MCF 10A (cell line): ENCODE measurements at regions of chr2 and their contacts with region 1.

Region 1: DNA sequence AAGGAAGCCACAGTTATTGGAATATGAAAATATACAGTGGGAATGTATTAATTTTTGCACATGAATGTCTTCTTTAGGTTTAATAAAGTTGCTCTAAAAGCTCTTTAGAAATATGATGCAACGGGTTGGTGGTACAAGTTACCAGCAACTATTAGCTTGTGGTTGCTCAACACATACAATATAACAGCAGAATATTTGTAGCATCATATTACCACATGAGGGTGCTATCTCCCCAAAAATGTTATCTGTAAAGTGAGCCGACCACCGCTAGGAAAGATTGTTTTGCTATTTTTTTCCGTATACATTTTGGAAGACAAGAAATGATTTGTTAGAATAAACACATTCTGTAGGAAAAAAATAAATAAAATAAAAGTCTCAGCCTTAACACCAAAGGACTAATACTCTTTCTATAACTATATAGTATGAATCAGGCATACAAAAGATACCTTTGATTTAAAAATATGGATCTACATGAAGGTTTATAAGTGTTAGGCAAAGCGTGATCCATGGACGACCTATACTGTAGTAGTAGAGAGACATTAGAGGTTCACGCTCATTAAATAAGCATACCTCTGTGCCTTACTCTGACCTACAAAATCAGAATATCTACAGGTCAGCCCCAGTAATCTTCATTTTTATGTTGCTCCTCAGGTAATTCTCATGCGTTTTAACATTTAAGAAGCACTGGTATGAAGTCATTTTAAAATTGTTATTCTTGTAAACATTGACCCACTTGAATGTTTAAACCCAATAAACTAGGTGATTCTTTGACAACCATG is 1110.6 kb upstream of the ACVR2A start:
- DNase-seq: peak; percentile 77
- H3K4me3 Mint-ChIP-seq: no peak overlapping the region
- H3K27ac Mint-ChIP-seq: no peak overlapping the region
- H3K4me1 Mint-ChIP-seq: no peaks in the 10 kb centered on the region
- H3K27me3 Mint-ChIP-seq: no peaks in the 10 kb centered on the region
- CTCF ChIP-seq: peak; percentile 67

Region 2: GRCh38 chr2:146777181-146777580 is 43.0 kb after region 1 on chr2:
- CTCF ChIA-PET with region 1: no interaction called
- POLR2A ChIA-PET with region 1: no interaction called
- intact Hi-C with region 1: no loop called
- DNase-seq: no peak
- H3K4me3 Mint-ChIP-seq: no peak overlapping the region
- H3K27ac Mint-ChIP-seq: no peak overlapping the region
- H3K4me1 Mint-ChIP-seq: no peaks in the 10 kb centered on the region
- H3K27me3 Mint-ChIP-seq: no peaks in the 10 kb centered on the region
- CTCF ChIP-seq: no peak

Region 3: DNA sequence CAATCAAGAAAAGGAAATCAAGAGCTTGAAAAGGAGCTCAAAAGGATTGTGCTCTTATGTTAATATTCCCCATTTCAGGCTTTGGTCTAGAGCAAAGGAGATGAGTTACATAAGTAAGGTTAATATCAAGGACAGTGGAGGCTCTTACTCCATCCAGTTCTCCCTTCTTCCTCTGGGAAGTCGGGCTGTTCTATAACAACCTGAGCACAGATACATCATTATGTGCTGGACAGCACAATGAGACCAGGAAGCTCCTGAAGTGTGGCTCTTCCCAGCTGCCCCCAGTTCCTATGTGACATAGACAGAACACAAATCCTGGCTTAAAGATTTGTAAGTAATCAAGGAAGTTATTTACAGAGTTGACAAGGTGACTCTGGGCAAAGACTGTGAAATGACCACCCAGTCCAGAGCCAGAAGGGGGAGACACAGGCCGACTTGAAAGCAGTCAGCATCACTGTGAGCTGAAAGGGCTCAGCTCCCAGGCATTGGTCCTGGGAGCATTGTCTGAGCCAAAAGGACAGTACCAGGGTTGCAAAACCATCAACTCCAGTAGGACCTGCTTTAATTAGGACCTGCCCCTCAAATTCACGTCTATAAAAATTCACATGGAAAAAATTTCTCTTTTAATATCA is 193.0 kb after region 1 on chr2:
- CTCF ChIA-PET with region 1: no interaction called
- POLR2A ChIA-PET with region 1: interaction called, 3 read pairs
- intact Hi-C with region 1: loop called (anchors 2 kb)
- DNase-seq: peak; percentile 71
- H3K4me3 Mint-ChIP-seq: no peak overlapping the region
- H3K27ac Mint-ChIP-seq: no peak overlapping the region
- H3K4me1 Mint-ChIP-seq: peaks cover 5% of the 10 kb centered on the region
- H3K27me3 Mint-ChIP-seq: no peaks in the 10 kb centered on the region
- CTCF ChIP-seq: peak; percentile 53

Region 4: GRCh38 chr2:147331790-147332419 is 597.7 kb after region 1 on chr2:
- CTCF ChIA-PET with region 1: interaction called, 3 read pairs
- POLR2A ChIA-PET with region 1: no interaction called
- intact Hi-C with region 1: loop called (anchors 1 kb)
- DNase-seq: peak; percentile 70
- H3K4me3 Mint-ChIP-seq: no peak overlapping the region
- H3K27ac Mint-ChIP-seq: no peak overlapping the region
- H3K4me1 Mint-ChIP-seq: no peaks in the 10 kb centered on the region
- H3K27me3 Mint-ChIP-seq: no peaks in the 10 kb centered on the region
- CTCF ChIP-seq: peak; percentile 72